ENCODE measurements at regions of chr16 and their contacts with region 1.

Region 1: GRCh38 chr16:75044800-75045430 is 46.1 kb downstream of the ZNRF1 start:
- DNase-seq: no peak
- ATAC-seq: peak; percentile 70

Region 2: DNA sequence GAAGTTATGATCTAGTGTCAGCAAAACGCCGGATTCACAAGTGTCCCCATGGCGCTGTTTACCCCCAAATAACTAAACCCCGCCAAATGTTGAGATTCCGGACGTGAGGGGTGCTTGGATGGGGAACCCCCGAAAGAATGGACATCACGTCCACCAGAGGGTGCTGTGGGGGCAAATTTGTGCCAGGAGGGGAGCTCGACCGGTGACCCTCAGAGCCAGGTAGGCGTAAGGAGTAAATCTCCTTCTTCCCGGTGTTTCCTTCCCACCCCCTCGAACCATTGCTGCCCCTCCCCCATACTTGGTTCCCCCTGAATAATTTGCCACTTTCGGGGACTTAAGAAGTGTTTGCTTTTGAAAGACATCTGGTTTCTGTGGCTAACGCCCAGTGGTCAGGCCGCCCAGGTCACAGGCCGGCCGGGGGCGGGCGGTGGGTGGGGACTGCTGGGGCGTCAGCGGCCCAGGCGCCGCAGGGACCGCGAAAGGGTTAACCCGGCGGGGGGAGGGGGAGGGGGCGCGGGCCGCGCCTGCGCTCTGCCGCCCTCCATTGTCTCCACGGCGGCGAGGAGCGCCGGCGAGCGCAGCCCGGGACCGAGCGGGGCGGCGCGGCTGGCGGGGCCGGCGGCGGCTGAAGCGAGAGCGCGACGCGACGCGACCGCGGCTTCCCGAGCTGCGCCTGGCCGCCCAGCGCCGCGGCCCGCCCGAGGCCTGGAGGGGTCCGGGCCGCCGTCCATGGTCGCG is 46.3 kb before region 1 on chr16 and contains the start of gene ZNRF1:
- intact Hi-C with region 1: loop called (anchors 1 kb)
- DNase-seq: peak; percentile 89
- ATAC-seq: peak; percentile 86
- total RNA-seq, gene ZNRF1: 27.2 TPM

Region 3: DNA sequence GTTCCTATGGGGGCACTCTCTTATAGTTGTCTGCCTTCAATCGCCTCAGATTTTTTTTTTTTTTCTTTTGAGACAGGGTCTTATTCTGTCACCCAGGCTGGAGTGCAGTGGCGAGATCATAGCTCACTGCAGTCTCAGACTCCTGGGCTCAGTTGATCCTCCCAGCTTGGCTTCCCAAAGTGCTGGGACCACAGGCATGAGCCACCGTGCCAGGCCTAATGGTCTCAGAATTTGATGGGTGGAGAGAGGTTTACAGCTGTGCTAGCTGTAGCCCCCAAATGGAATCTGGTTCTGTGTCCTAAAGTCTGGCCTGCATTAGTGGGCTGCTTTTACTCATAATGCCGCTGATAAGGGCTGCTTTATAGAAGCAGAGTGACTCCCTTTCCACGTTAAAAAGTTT is 41.0 kb before region 1 on chr16:
- intact Hi-C with region 1: loop called (anchors 1 kb)
- DNase-seq: no peak
- ATAC-seq: no peak